A549 (cell line): ENCODE measurements at regions of chr15 and their contacts with region 1.

Region 1: GRCh38 chr15:57866149-57866736 is 159.7 kb downstream of the POLR2M start:
- DNase-seq: peak; percentile 53 to 58
- ATAC-seq: peak; percentile 72 to 89
- H3K4me3 ChIP-seq: no peak overlapping the region
- H3K27ac ChIP-seq: no peak overlapping the region
- H3K4me1 ChIP-seq: no peaks in the 10 kb centered on the region
- CTCF ChIP-seq: peak; percentile 83
- EP300 ChIP-seq: no peak
- POLR2A ChIP-seq: no peak
- RAD21 ChIP-seq: peak; percentile 59 to 63

Region 2: GRCh38 chr15:57751177-57751800 is 115.0 kb before region 1 on chr15:
- CTCF ChIA-PET with region 1: interaction called, 126 read pairs
- POLR2A ChIA-PET with region 1: no interaction called
- DNase-seq: peak; percentile 29 to 50
- ATAC-seq: peak; percentile 65 to 85; a peak in 4 of 6 replicates
- H3K4me3 ChIP-seq: no peak overlapping the region
- H3K27ac ChIP-seq: no peak overlapping the region
- H3K4me1 ChIP-seq: no peaks in the 10 kb centered on the region
- CTCF ChIP-seq: peak; percentile 63
- EP300 ChIP-seq: no peak
- POLR2A ChIP-seq: no peak
- RAD21 ChIP-seq: peak; percentile 71 to 76

Region 3: DNA sequence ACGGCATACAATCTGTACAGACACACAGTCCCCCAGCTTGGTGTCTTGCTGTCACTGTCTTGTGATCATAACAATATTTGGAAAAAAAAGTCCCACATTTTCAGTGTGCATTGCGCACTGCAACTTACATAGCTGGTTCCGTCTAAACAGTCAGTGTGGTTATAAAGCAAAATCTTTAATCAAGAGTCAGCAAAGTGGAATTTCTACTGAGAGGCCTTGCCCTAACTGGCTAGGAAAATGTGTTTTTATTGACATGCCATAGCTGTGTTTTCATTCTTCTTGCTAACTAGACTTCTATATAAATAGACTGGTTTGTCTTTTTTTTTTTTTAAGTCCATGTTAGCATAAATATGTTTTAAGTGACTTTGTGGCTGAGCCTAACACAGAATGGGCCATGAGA is 15.1 kb after region 1 on chr15:
- CTCF ChIA-PET with region 1: interaction called, 49 read pairs
- POLR2A ChIA-PET with region 1: no interaction called
- DNase-seq: no peak
- ATAC-seq: no peak
- H3K4me3 ChIP-seq: no peak overlapping the region
- H3K27ac ChIP-seq: no peak overlapping the region
- H3K4me1 ChIP-seq: no peaks in the 10 kb centered on the region
- CTCF ChIP-seq: no peak
- EP300 ChIP-seq: no peak
- POLR2A ChIP-seq: no peak
- RAD21 ChIP-seq: no peak

Region 4: DNA sequence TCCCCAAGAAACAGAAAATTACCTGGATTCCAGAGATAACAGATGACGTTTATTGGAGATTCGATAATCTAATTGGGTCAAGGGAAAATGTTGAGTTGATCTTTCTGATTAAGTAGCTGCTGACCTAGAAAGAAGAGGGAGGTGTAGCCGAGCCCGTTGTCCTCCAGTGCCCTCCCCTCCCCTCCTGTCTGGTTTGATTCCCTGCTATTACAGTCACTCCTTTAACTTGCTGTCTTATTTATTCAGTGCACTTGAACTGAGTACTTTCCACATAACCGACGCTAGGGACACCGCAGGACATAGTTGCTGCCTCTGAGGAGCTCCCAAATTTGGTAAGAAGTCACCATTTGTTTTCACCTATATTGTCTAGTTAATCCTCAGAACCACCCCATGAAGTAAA is 375.6 kb after region 1 on chr15:
- CTCF ChIA-PET with region 1: no interaction called
- POLR2A ChIA-PET with region 1: no interaction called
- DNase-seq: peak in 1 of 2 experiments; percentile 44
- ATAC-seq: peak; percentile 58 to 74; a peak in 5 of 6 replicates
- H3K4me3 ChIP-seq: no peak overlapping the region
- H3K27ac ChIP-seq: no peak overlapping the region
- H3K4me1 ChIP-seq: no peaks in the 10 kb centered on the region
- CTCF ChIP-seq: no peak
- EP300 ChIP-seq: no peak
- POLR2A ChIP-seq: no peak
- RAD21 ChIP-seq: no peak